ENCODE measurements at regions of chrX and their contacts with region 1.

Region 1: DNA sequence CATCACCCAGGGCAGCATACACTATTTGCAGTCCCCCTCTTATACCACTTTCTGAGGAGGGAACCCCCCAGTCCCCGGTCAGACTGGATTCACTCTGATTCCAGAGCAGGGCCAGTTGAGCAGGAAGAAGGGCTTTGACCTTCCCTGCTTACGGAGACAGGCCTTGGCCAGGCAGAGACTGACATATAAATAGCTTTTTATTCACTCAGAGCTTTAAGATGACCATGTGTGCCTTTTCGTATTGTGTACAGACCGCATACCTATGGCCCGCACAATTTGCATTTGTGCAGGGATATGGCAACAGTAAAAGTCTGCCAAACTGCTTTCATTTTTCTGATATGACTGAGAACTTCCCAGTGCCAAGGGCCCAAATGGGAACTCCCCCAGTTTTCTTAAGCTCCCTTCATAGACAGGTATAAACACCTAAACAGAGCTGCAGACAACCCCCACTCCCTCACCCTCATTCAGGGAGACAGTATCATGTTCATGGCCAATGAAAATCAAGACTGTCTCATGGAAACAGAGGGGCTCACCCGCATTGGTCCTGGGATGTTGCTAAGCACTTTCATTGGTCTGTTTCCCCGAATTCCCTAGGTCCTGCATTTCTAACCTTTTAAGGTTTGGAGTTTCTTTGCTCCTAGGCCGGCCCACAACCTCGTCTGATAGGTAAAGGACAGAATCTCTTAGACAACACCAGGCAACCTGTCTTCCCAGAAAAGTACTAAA is 86.0 kb downstream of the RTL5 start:
- DNase-seq: peak; percentile 41
- H3K4me3 ChIP-seq: no peak overlapping the region
- H3K27ac ChIP-seq: peak overlapping the region; percentile 42
- H3K4me1 ChIP-seq: peaks cover 24% of the 10 kb centered on the region
- H3K27me3 ChIP-seq: no peaks in the 10 kb centered on the region
- CTCF ChIP-seq: no peak
- POLR2A ChIP-seq: no peak

Region 2: GRCh38 chrX:72029483-72030411 is 16.0 kb before region 1 on chrX:
- CTCF ChIA-PET with region 1: interaction called, 12 read pairs
- POLR2A ChIA-PET with region 1: interaction called, 6 read pairs
- dilution Hi-C with region 1: no loop called
- intact Hi-C with region 1: loop called (anchors 1 kb)
- DNase-seq: peak; percentile 89
- H3K4me3 ChIP-seq: no peak overlapping the region
- H3K27ac ChIP-seq: peak overlapping the region; percentile 52
- H3K4me1 ChIP-seq: peaks cover 23% of the 10 kb centered on the region
- H3K27me3 ChIP-seq: no peaks in the 10 kb centered on the region
- CTCF ChIP-seq: no peak
- POLR2A ChIP-seq: no peak

Region 3: DNA sequence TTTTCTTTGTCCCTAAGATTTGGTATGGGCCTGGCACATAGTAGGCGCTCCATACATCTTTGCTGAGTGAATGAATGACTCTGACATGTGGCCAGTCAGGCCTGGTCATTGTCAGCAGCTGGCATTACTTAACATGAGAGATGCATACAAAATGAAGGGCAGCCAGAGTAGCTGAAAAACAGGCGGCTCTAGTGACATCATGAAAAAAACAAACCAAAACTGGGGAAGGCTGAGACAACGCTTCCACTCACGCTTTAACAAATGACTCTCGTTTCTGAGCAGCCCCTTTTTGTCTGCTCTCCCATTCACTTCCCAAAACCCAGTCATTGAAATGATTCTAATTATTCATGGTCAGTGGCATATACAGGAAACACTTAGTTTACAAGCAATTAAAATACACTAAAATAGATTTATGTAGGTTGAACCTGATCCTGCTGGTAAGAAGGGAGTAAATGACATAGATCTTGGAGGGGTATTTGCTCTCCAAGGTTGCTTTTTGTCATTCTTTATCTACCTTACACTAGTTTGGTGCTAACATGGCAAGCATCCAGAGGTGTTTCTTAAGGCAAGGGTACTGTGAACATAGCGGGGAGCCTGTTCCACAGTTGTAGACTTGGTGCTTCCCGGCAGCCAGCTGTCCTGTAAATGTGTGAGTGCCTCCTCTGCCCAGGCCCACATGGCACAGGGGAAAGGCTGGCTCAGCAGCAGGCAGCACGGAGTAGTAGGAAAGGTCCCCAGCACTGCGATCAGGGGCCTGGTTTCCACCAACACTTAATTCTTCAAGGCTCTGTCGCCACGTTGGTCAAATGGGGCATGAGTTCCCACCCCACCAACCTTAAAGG is 321.1 kb after region 1 on chrX:
- CTCF ChIA-PET with region 1: no interaction called
- POLR2A ChIA-PET with region 1: no interaction called
- dilution Hi-C with region 1: no loop called
- intact Hi-C with region 1: no loop called
- DNase-seq: no peak
- H3K4me3 ChIP-seq: no peak overlapping the region
- H3K27ac ChIP-seq: no peak overlapping the region
- H3K4me1 ChIP-seq: no peaks in the 10 kb centered on the region
- H3K27me3 ChIP-seq: no peaks in the 10 kb centered on the region
- CTCF ChIP-seq: no peak
- POLR2A ChIP-seq: no peak

Region 4: GRCh38 chrX:72604112-72604511 is 558.4 kb after region 1 on chrX:
- CTCF ChIA-PET with region 1: no interaction called
- POLR2A ChIA-PET with region 1: no interaction called
- dilution Hi-C with region 1: no loop called
- intact Hi-C with region 1: no loop called
- DNase-seq: no peak
- H3K4me3 ChIP-seq: no peak overlapping the region
- H3K27ac ChIP-seq: no peak overlapping the region
- H3K4me1 ChIP-seq: no peaks in the 10 kb centered on the region
- H3K27me3 ChIP-seq: no peaks in the 10 kb centered on the region
- CTCF ChIP-seq: no peak
- POLR2A ChIP-seq: no peak